WTC11 (cell line): ENCODE measurements at regions of chr22 and their contacts with region 1.

Region 1: GRCh38 chr22:42437488-42438292 is 5.5 kb upstream of the NFAM1 start:
- DNase-seq: peak; percentile 89
- ATAC-seq: peak; percentile 69
- H3K4me3 Mint-ChIP-seq: peak overlapping the region; percentile 70
- H3K27ac Mint-ChIP-seq: 0 out of 2 replicates have a peak overlapping the region, but pooled peaks have one; percentile 27
- H3K4me1 Mint-ChIP-seq: peaks cover 37% of the 10 kb centered on the region
- H3K27me3 Mint-ChIP-seq: peaks cover 20% of the 10 kb centered on the region
- CTCF ChIP-seq: peak; percentile 97

Region 2: GRCh38 chr22:42169055-42169469 is 268.6 kb before region 1 on chr22:
- CTCF ChIA-PET with region 1: interaction called, 35 read pairs
- POLR2A ChIA-PET with region 1: no interaction called
- DNase-seq: peak; percentile 90
- ATAC-seq: peak; percentile 92
- H3K4me3 Mint-ChIP-seq: no peak overlapping the region
- H3K27ac Mint-ChIP-seq: 0 out of 2 replicates have a peak overlapping the region, but pooled peaks have one; percentile 47
- H3K4me1 Mint-ChIP-seq: peaks cover 35% of the 10 kb centered on the region
- H3K27me3 Mint-ChIP-seq: no peaks in the 10 kb centered on the region
- CTCF ChIP-seq: peak; percentile 85

Region 3: GRCh38 chr22:42340829-42341383 is 96.8 kb before region 1 on chr22:
- CTCF ChIA-PET with region 1: interaction called, 12 read pairs
- POLR2A ChIA-PET with region 1: no interaction called
- DNase-seq: peak; percentile 48
- ATAC-seq: no peak
- H3K4me3 Mint-ChIP-seq: peak overlapping the region; percentile 72
- H3K27ac Mint-ChIP-seq: no peak overlapping the region
- H3K4me1 Mint-ChIP-seq: peaks cover 28% of the 10 kb centered on the region
- H3K27me3 Mint-ChIP-seq: peaks cover 19% of the 10 kb centered on the region
- CTCF ChIP-seq: no peak